ENCODE measurements at regions of chr11 and their contacts with region 1.

Region 1: DNA sequence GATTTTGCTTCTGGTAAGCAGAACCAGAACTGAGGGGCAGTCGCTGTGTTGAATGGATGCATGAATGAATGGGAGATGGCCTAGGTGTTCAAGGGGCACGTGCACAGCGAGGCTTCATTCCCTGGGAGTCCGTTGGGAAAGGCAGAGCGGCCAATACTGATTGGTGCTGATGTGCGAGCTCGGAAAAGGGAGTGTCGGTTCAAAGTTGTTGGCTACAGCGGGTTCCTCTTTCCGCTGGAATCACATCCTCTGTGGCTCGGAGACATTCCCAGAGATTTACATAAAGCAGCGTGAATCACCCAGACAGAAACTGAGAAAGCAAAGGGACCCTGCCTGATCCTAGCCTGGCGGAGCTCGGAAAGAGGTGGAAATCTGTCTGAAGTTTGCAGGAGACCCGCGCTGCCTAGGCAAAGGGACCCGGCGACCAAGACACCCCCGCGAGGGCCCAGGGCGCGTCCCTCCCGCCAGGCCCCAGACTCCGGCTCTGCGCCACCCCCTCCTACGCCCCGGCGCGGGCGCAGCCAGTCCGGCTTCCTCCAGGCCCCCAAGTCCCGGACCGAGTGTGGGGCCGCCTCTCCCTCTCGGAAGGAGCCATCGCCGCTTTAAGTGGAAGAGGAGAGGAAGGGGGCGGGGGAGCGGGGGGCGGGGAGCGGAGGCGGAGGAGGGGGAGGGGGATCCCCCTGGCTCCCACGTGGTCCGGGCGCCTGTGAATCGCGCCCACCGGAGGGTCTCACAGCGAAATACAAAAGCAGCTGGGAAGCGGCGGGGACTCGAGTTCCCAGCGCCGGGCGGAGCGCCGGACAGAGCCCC is at the start of gene FJX1:
- DNase-seq: peak; percentile 84
- CTCF ChIP-seq: no peak

Region 2: GRCh38 chr11:35822815-35823495 is 205.1 kb after region 1 on chr11:
- in situ Hi-C with region 1: loop called (anchors 10 kb)
- DNase-seq: no peak
- CTCF ChIP-seq: no peak

Region 3: GRCh38 chr11:36131721-36132397 is 514.0 kb after region 1 on chr11:
- in situ Hi-C with region 1: loop called (anchors 10 kb)
- DNase-seq: peak; percentile 58
- CTCF ChIP-seq: peak; percentile 75

Region 4: DNA sequence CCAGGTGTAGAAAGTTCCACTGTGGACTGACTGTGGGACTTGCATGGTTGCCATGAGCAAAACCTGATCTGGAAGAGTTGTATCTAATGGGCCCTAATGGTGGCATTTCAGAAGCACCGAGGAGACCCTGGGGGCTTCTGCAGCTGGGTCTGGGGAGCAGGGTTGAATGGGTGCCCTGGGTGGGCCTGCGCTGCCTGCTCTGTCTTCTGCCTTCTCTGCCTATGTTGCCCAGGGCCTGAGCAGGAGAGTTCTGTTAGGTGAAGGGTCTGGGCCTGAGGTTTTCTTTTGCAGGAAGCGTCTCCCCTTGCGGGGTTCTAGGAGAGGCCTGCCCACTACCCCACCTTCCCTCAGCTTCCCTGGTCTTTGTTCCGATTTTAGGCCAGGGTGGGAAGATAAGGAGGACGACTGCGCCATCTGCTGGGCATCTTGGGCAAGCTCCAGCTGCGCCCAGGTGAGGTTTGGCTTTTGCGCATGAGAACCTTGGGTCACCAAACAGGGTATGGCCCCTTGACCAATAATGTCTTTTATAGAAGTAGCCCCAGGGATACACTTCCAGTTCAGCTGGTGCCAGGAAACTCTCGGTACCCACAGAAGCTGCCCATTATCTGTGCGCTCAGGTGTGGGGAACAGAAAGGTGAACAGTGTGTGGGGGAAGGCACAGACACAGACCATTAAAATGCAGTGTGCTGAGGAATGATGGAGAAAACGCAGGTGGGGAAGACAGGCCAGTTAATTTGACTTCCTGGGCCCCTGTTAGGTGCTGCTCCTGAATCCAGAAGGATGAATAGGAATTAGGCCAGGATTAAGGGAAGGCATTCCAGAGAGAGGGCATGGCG is 648.1 kb after region 1 on chr11:
- in situ Hi-C with region 1: loop called (anchors 10 kb)
- DNase-seq: peak; percentile 67
- CTCF ChIP-seq: peak; percentile 94

Measured in GM13977 (cell line).